Activated CD4-positive, alpha-beta T cell treated with anti-CD3 and anti-CD28 coated beads for 36 hours (primary cell): ENCODE measurements at regions of chr2 and their contacts with region 1.

Region 1: GRCh38 chr2:204325468-204325867 is 219.8 kb upstream of the PARD3B start:
- DNase-seq: peak; percentile 68
- ATAC-seq: peak; percentile 81
- H3K4me3 Mint-ChIP-seq: no peak overlapping the region
- H3K27ac Mint-ChIP-seq: no peak overlapping the region
- H3K4me1 Mint-ChIP-seq: no peaks in the 10 kb centered on the region
- H3K27me3 Mint-ChIP-seq: peaks cover 10% of the 10 kb centered on the region

Region 2: DNA sequence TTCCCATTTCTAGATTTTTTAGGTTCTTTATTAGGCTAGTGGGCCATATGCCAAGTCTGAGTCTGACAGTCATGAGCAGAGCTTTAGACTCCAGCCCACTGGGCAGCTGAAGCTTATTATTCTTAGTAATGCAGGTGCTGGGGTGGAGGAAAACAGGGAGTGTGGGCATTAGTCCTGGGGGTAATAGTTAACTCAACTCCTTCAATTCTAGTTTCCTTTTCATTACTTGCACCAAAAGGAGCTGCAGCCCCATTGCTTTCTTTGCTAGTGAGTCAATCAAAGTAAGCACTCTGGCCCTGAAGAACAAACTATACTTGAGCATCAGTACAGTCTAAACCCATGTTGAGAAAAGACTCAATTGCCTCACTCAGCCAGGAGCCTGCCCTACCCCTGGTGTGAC is 353.4 kb before region 1 on chr2:
- CTCF ChIA-PET with region 1: no interaction called
- POLR2A ChIA-PET with region 1: no interaction called
- intact Hi-C with region 1: no loop called
- DNase-seq: no peak
- ATAC-seq: no peak
- H3K4me3 Mint-ChIP-seq: no peak overlapping the region
- H3K27ac Mint-ChIP-seq: no peak overlapping the region
- H3K4me1 Mint-ChIP-seq: peaks cover 27% of the 10 kb centered on the region
- H3K27me3 Mint-ChIP-seq: no peaks in the 10 kb centered on the region

Region 3: GRCh38 chr2:204691911-204692510 is 366.5 kb after region 1 on chr2:
- CTCF ChIA-PET with region 1: interaction called, 5 read pairs
- POLR2A ChIA-PET with region 1: no interaction called
- intact Hi-C with region 1: loop called (anchors 1 kb)
- DNase-seq: peak; percentile 24
- ATAC-seq: peak; percentile 36
- H3K4me3 Mint-ChIP-seq: no peak overlapping the region
- H3K27ac Mint-ChIP-seq: no peak overlapping the region
- H3K4me1 Mint-ChIP-seq: peaks cover 10% of the 10 kb centered on the region
- H3K27me3 Mint-ChIP-seq: no peaks in the 10 kb centered on the region

Region 4: DNA sequence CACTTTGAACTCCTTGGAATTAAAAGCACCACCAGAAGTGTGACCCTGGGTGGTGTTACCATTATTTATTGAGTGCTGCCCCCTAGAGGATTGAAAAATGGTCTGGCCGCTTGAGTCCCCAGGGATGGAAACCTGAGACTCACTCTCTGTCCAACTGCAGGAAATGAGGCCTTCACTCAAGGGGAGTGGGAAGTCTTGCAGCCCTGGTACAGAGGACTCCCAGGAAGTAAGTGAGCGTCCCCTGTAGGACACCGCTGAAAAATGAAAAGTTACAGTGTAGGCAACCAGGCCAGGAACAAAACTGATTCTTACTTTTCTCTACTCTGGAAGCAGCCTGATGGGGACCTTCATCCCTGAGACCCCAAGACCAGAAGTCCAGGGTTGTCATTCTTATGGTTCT is 1354.6 kb after region 1 on chr2:
- CTCF ChIA-PET with region 1: interaction called, 11 read pairs
- POLR2A ChIA-PET with region 1: no interaction called
- intact Hi-C with region 1: loop called (anchors 2 kb)
- DNase-seq: peak; percentile 67
- ATAC-seq: peak; percentile 63
- H3K4me3 Mint-ChIP-seq: no peak overlapping the region
- H3K27ac Mint-ChIP-seq: no peak overlapping the region
- H3K4me1 Mint-ChIP-seq: peaks cover 15% of the 10 kb centered on the region
- H3K27me3 Mint-ChIP-seq: peaks cover 39% of the 10 kb centered on the region

Region 5: DNA sequence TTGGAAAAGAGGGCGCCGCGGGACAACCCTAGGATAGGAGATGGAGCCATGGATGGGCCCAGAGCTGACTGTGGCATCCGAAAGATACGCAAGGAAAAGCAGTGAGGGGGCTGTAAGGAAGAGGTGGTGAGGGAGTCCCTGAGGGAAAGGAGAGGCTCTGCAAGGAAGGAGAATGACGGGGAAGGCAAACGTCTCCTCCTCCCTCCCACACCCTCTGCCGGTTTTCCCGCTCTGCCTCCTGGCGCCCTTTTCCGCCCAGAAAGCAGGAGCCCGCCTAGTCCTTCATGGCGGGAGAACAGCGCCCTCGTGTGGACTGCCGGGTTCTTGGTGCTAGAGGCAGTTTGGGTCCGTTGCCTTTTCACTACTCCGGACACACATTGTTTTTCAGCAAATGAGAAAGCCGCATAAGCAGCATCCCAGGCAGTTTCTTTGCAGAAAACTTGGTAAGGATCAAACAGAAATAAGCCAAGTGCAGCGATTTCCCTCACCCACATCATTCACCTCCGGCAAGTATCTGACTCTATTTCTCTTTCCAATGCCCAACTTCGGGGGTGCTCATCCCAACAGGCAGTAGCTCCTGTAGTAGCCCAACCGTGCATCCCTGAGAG is 1560.1 kb after region 1 on chr2:
- CTCF ChIA-PET with region 1: no interaction called
- POLR2A ChIA-PET with region 1: no interaction called
- intact Hi-C with region 1: loop called in 1 of 2 experiments (anchors 2 kb)
- DNase-seq: peak; percentile 86
- ATAC-seq: peak; percentile 69
- H3K4me3 Mint-ChIP-seq: no peak overlapping the region
- H3K27ac Mint-ChIP-seq: no peak overlapping the region
- H3K4me1 Mint-ChIP-seq: no peaks in the 10 kb centered on the region
- H3K27me3 Mint-ChIP-seq: peaks cover 16% of the 10 kb centered on the region

Region 6: GRCh38 chr2:205947621-205948495 is 1622.4 kb after region 1 on chr2:
- CTCF ChIA-PET with region 1: no interaction called
- POLR2A ChIA-PET with region 1: no interaction called
- intact Hi-C with region 1: loop called (anchors 2 to 5 kb)
- DNase-seq: peak; percentile 76
- ATAC-seq: peak; percentile 77
- H3K4me3 Mint-ChIP-seq: no peak overlapping the region
- H3K27ac Mint-ChIP-seq: no peak overlapping the region
- H3K4me1 Mint-ChIP-seq: peaks cover 2% of the 10 kb centered on the region
- H3K27me3 Mint-ChIP-seq: peaks cover 10% of the 10 kb centered on the region